CD4-positive, alpha-beta memory T cell (primary cell): ENCODE measurements at regions of chr17 and their contacts with region 1.

Region 1: DNA sequence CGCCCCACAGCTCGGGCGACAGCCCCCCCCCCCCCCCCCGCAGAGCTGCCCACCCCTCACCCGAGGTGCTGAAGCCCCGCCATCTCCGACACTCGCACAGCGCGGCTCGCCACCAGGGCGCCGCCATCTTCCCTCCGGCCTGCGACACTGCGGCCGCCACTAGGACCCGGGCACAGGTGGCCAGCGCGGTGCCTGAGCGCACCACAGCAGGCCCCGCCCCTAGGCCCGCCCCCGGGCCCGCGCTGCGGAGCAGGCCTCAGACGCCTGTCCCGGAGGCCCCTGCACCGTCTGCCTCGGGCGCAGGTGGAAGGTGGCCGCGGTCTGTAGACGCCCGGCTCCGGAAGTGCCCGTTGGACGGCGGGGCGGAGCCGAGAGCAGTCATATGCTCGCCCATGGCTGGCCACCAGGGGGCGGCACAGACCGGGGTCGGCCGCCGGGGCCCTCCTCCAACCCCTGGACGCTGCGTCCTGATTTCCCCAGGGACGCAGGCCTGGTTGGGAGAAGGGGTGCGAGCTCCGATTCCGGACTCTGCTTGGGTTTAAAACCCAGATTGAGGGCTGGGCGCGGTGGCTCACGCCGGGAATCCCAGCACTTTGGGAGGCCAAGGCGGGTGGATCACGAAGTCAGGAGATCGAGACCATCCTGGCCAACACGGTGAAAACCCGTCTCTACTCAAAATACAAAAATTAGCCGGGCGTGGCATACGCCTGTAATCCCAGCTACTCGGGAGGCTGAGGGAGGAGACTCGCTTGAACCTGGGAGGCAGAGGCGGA is at the start of gene MRPL38:
- DNase-seq: peak; percentile 93 to 98 (median 95)
- H3K4me3 ChIP-seq: peak within 1 kb of the TSS; percentile 57 to 61
- H3K4me3 Mint-ChIP-seq: peak within 1 kb of the TSS; percentile 88 to 93 (median 92)
- H3K27ac ChIP-seq: peak within 1 kb of the TSS; percentile 74
- H3K27ac Mint-ChIP-seq: peak within 1 kb of the TSS; percentile 82 to 98 (median 94)
- H3K4me1 ChIP-seq: peaks cover 17% of the 10 kb centered on the region
- H3K4me1 Mint-ChIP-seq: peaks cover 5 to 20% (median 9%) of the 10 kb centered on the region in 4 donors
- H3K27me3 ChIP-seq: no peaks in the 10 kb centered on the region
- H3K27me3 Mint-ChIP-seq: no peaks in the 10 kb centered on the region
- total RNA-seq, gene MRPL38: 126 to 142 TPM

Region 2: GRCh38 chr17:75877752-75878173 is 27.2 kb before region 1 on chr17:
- CTCF ChIA-PET with region 1: interaction called, 5 read pairs
- POLR2A ChIA-PET with region 1: interaction called, 337 read pairs
- intact Hi-C with region 1: loop called (anchors 1 kb)
- DNase-seq: peak; percentile 71 to 76 (median 75)
- H3K4me3 ChIP-seq: peak overlapping the region; percentile 61 to 76
- H3K4me3 Mint-ChIP-seq: peak overlapping the region; percentile 89 to 95 (median 91)
- H3K27ac ChIP-seq: peak overlapping the region; percentile 56
- H3K27ac Mint-ChIP-seq: peak overlapping the region; percentile 88 to 97 (median 94)
- H3K4me1 ChIP-seq: peaks cover 64% of the 10 kb centered on the region
- H3K4me1 Mint-ChIP-seq: peaks cover 26 to 62% (median 45%) of the 10 kb centered on the region in 4 donors
- H3K27me3 ChIP-seq: no peaks in the 10 kb centered on the region
- H3K27me3 Mint-ChIP-seq: no peaks in the 10 kb centered on the region

Region 3: DNA sequence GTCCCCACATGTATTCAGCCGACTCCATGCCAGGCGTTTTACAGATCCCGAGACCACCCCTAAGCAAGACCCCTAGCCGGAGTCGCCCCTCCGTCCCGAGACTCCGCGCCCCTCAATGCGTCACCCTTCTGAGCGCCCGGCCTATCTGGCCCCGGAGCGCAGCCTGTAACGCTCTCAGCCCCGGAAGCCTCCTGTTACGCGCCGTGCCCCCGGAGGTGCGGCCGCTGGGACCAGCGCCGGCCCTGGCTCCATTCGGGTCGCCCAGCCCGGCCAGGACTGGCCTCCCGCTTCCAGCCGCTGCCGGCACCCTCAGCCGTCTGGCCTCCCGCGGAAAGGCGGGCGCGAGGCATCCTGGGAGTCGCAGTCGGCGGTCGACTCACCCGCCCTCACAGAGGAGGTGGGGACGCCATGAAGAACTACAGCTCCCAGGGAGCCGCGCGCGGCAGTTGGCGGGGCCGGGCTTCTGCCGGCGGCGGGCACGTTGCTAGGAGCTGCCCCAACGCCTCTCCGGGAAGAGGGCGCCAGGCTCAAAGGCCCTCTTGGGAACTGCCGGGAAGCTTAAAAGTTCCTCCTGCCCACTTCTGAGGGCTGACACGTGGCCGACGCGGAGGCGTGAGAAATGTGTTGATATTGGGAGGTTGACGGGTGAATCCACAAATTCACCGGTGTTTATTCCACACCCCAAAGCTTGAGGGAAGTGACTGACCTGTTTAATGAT is 35.9 kb after region 1 on chr17 and contains the start of gene FBF1:
- CTCF ChIA-PET with region 1: interaction called, 6 read pairs
- POLR2A ChIA-PET with region 1: interaction called, 10 read pairs
- intact Hi-C with region 1: loop called (anchors 1 kb)
- DNase-seq: peak; percentile 82 to 89 (median 84)
- H3K4me3 ChIP-seq: peak within 1 kb of the TSS; percentile 63 to 74
- H3K4me3 Mint-ChIP-seq: peak within 1 kb of the TSS; percentile 84 to 93 (median 90)
- H3K27ac ChIP-seq: peak within 1 kb of the TSS; percentile 86
- H3K27ac Mint-ChIP-seq: peak within 1 kb of the TSS; percentile 48 to 96 (median 92)
- H3K4me1 ChIP-seq: peaks cover 10% of the 10 kb centered on the region
- H3K4me1 Mint-ChIP-seq: peaks cover 7 to 14% (median 10%) of the 10 kb centered on the region in 4 donors
- H3K27me3 ChIP-seq: no peaks in the 10 kb centered on the region
- H3K27me3 Mint-ChIP-seq: no peaks in the 10 kb centered on the region
- total RNA-seq, gene FBF1: 39.6 to 42.7 TPM

Region 4: DNA sequence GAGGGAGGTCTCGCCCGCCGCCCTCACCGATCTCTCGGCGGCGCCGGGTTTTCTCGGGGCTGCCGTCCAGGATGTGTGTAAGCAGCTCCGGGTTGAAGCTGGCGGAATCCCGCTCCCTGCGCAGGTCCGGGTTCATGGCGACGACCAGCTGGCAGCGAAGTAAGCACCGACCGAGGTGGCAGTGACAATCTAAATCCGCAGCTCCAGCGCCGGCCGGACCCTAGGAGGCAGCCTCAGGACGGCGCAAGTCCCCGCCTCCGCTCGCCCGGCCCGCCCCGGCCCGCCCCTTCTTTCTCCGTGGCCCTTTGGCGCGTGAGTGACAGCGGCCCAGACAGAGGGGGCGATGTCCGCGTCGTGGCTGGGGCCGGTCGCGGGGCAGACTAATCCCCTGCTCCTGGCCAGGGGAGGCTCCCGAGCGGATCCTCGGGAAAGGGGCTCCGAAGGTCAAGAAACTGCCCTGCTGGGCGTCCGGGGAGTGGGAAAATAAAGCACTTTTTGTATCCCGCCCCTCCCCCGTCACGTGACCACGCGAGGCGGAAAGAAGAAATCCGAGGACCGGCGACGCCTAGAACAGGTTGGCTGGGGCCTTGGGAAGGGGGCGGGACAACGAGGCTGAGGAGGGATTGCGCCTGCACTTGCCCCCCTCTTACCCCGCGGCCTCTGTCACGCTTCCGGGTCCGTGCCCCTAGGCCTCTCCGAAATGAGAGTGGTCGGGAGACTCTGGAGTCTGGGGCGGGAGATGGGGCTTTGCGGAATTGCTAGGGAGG is 74.2 kb after region 1 on chr17 and contains the starts of genes ACOX1 and TEN1:
- CTCF ChIA-PET with region 1: no interaction called
- POLR2A ChIA-PET with region 1: interaction called, 14 read pairs
- intact Hi-C with region 1: loop called (anchors 1 kb)
- DNase-seq: peak; percentile 93 to 97 (median 95)
- H3K4me3 ChIP-seq: peak within 1 kb of the TSS; percentile 61 to 88
- H3K4me3 Mint-ChIP-seq: peak within 1 kb of the TSS; percentile 93 to 99 (median 96)
- H3K27ac ChIP-seq: peak within 1 kb of the TSS; percentile 79
- H3K27ac Mint-ChIP-seq: peak within 1 kb of the TSS; percentile 99 to 100 (median 99)
- H3K4me1 ChIP-seq: peaks cover 30% of the 10 kb centered on the region
- H3K4me1 Mint-ChIP-seq: peaks cover 18 to 57% (median 34%) of the 10 kb centered on the region in 4 donors
- H3K27me3 ChIP-seq: no peaks in the 10 kb centered on the region
- H3K27me3 Mint-ChIP-seq: no peaks in the 10 kb centered on the region
- total RNA-seq, gene ACOX1: 30.4 to 31.7 TPM
- total RNA-seq, gene TEN1: 10.2 to 16.1 TPM

Region 5: GRCh38 chr17:76005263-76006149 is 100.6 kb after region 1 on chr17:
- CTCF ChIA-PET with region 1: interaction called, 120 read pairs
- POLR2A ChIA-PET with region 1: interaction called, 23 read pairs
- intact Hi-C with region 1: loop called (anchors 1 kb)
- DNase-seq: peak; percentile 68 to 76 (median 74)
- H3K4me3 ChIP-seq: no peak overlapping the region
- H3K4me3 Mint-ChIP-seq: no peak overlapping the region
- H3K27ac ChIP-seq: no peak overlapping the region
- H3K27ac Mint-ChIP-seq: peak overlapping the region in 4 of 7 donors; percentile 2 to 59 (median 24)
- H3K4me1 ChIP-seq: no peaks in the 10 kb centered on the region
- H3K4me1 Mint-ChIP-seq: peaks cover 0 to 5% (median 3%) of the 10 kb centered on the region in 4 donors
- H3K27me3 ChIP-seq: no peaks in the 10 kb centered on the region
- H3K27me3 Mint-ChIP-seq: no peaks in the 10 kb centered on the region

Region 6: GRCh38 chr17:76353599-76354316 is 448.8 kb after region 1 on chr17 and contains the start of gene PRPSAP1:
- CTCF ChIA-PET with region 1: no interaction called
- POLR2A ChIA-PET with region 1: interaction called, 4 read pairs
- intact Hi-C with region 1: loop called (anchors 1 kb)
- DNase-seq: peak; percentile 82 to 90 (median 85)
- H3K4me3 ChIP-seq: peak within 1 kb of the TSS; percentile 52 to 88
- H3K4me3 Mint-ChIP-seq: peak within 1 kb of the TSS; percentile 92 to 99 (median 96)
- H3K27ac ChIP-seq: peak within 1 kb of the TSS; percentile 77
- H3K27ac Mint-ChIP-seq: peak within 1 kb of the TSS; percentile 82 to 99 (median 98)
- H3K4me1 ChIP-seq: peaks cover 16% of the 10 kb centered on the region
- H3K4me1 Mint-ChIP-seq: peaks cover 12 to 29% (median 20%) of the 10 kb centered on the region in 4 donors
- H3K27me3 ChIP-seq: no peaks in the 10 kb centered on the region
- H3K27me3 Mint-ChIP-seq: no peaks in the 10 kb centered on the region
- total RNA-seq, gene PRPSAP1: 63.4 to 65.8 TPM